Dendritic cell treated with granulocyte-macrophage colony-stimulating factor and Interleukin-4, amounts not matched to agents 40 ng/mL and 50 ng/mL, for 4 days (primary cell): ENCODE measurements at regions of chr10 and their contacts with region 1.

Region 1: GRCh38 chr10:3873728-3874461 is 88.9 kb upstream of the KLF6 start:
- H3K4me3 Mint-ChIP-seq: no peak overlapping the region
- H3K27ac Mint-ChIP-seq: peak overlapping the region; percentile 74
- H3K4me1 Mint-ChIP-seq: peaks cover 57% of the 10 kb centered on the region
- H3K27me3 Mint-ChIP-seq: no peaks in the 10 kb centered on the region

Region 2: DNA sequence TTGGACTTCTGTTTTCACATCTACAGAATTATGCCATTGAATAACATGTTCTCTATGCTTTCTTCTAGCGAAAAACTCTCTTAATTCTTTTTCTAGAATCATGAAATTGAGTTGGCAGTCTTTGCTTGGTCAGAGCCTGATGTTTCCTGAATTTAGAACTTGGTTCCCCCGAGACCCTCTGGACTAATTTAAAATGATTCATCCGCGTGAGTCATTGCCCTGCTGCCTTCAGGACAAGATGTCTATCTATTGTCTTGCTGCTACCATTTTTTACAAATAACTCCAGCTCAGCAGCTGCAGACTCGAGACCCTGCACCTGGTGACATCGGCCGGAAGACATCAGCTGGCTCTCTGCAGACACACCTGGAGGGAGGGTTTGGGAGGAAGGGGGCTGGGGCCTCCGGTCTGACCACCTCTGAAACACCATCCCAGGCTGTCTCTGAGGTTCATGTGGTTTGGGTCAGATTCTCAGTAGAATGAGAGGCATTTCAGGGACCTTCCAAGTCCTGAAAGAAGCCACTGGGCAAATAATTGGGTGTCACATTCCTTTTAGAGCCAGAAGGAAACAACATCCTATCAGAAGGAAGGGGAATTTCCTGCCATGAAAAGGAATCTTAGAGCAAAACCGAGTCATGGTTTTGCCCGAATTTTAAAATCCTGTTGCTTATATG is 68.0 kb before region 1 on chr10:
- intact Hi-C with region 1: loop called (anchors 2 kb)
- H3K4me3 Mint-ChIP-seq: no peak overlapping the region
- H3K27ac Mint-ChIP-seq: no peak overlapping the region
- H3K4me1 Mint-ChIP-seq: peaks cover 60% of the 10 kb centered on the region
- H3K27me3 Mint-ChIP-seq: no peaks in the 10 kb centered on the region

Region 3: DNA sequence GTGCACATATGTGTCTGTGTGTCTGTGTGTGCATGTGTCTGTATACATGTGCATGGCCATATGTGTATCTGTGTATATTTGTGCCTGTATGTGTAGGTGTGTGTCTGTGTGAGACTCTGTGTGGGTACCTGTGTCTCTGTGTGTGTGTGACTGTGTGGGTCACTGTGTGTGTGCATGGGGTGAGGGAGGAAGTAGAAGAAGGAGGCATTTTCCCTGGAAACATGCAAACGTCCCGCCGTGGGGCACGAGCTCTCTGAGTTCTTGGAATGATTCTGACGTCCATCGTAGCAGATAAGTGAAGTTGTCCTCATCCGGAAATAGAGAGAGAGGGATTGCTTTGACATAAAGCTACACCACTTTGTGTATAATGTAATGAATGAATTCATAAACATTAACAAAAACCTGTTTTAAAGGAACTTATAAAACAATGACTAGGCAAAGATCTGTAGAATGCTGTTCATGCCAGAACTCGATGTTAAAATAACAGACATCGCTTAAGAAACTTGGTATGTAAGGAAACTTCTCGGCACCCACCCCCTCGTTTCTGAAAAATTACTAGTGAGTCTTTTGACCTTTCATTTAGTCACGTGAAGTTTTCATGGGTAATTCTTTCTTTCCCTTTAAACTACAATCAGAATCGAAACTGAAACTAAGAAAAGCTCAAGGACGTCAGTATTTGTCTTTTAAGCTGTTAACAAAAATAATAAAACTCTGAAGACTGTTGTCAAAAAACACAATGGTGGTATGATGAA is 45.3 kb before region 1 on chr10:
- intact Hi-C with region 1: loop called (anchors 2 kb)
- H3K4me3 Mint-ChIP-seq: peak overlapping the region; percentile 39
- H3K27ac Mint-ChIP-seq: peak overlapping the region; percentile 84
- H3K4me1 Mint-ChIP-seq: peaks cover 49% of the 10 kb centered on the region
- H3K27me3 Mint-ChIP-seq: no peaks in the 10 kb centered on the region

Region 4: DNA sequence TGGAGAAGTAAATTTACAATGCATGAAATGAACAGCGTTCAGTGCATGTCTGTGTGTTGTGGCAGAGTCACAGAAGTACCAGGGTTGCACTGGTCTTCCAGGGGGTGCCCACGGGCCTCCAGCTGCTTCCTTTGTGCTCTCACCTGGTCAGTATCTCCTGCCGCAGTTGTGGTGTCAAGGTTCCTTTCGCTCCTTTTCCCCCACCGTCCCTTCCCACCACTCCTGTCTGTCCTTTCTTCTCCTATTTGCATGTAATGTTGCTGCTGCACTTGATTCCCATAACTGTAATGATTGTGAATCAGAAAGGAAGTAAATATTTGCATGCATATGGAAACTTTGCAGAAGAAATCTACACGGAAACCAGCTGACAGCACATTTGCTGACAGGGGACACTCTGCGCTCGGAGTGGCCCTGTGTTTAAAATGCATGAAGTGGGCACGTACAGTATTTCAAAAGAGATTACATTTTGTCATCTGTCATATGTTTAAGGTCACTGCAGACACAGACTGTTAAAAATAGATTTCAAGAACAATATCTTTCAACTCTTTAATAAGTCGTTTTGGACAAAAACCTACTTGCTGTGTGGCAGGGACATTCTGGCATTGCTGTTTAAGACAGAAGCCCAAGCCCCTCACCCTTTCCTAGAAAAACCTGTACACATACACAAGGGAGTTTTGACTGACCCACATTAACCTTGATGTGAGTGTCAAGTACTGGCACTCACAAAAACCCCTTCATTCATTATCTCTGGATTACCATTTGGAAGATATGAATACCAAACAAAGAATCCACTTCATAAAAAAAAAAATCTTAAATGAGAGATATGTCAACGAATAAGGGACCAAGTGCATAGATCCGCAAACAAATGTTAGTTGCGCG is 247.8 kb after region 1 on chr10:
- intact Hi-C with region 1: loop called (anchors 1 kb)
- H3K4me3 Mint-ChIP-seq: peak overlapping the region; percentile 80
- H3K27ac Mint-ChIP-seq: peak overlapping the region; percentile 97
- H3K4me1 Mint-ChIP-seq: peaks cover 35% of the 10 kb centered on the region
- H3K27me3 Mint-ChIP-seq: no peaks in the 10 kb centered on the region